Activated CD4-positive, alpha-beta T cell treated with anti-CD3 and anti-CD28 coated beads for 36 hours (primary cell): ENCODE measurements at regions of chr2 and their contacts with region 1.

Region 1: DNA sequence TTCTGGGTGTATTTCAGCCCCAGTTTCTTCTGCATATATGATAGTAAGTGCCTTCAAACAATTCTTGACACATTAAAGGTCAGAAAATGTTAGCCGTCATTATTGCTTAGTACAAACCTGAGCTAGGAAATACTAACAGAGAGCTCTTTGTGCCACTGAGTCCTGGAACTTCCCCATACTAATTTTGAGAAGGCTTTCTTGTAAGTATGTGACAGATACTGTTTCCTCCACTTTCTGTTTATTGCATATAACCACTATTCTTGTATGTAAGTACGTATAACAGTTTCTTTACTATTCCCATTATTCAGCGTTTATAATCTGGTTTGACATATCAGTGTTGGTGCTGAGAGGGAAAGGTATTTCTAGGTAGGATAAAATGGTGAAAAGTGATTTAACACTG is 9.8 kb downstream of the PPP1CB start:
- DNase-seq: no peak
- ATAC-seq: peak; percentile 59
- H3K4me3 Mint-ChIP-seq: no peak overlapping the region
- H3K27ac Mint-ChIP-seq: peak overlapping the region; percentile 58
- H3K4me1 Mint-ChIP-seq: peaks cover 78% of the 10 kb centered on the region
- H3K27me3 Mint-ChIP-seq: no peaks in the 10 kb centered on the region

Region 2: GRCh38 chr2:28674062-28674712 is 87.2 kb before region 1 on chr2:
- CTCF ChIA-PET with region 1: no interaction called
- POLR2A ChIA-PET with region 1: no interaction called
- intact Hi-C with region 1: no loop called
- DNase-seq: no peak
- ATAC-seq: no peak
- H3K4me3 Mint-ChIP-seq: no peak overlapping the region
- H3K27ac Mint-ChIP-seq: peak overlapping the region; percentile 35
- H3K4me1 Mint-ChIP-seq: peaks cover 12% of the 10 kb centered on the region
- H3K27me3 Mint-ChIP-seq: no peaks in the 10 kb centered on the region

Region 3: GRCh38 chr2:28780496-28780895 is 19.1 kb after region 1 on chr2:
- CTCF ChIA-PET with region 1: interaction called, 11 read pairs
- POLR2A ChIA-PET with region 1: no interaction called
- intact Hi-C with region 1: no loop called
- DNase-seq: no peak
- ATAC-seq: no peak
- H3K4me3 Mint-ChIP-seq: no peak overlapping the region
- H3K27ac Mint-ChIP-seq: peak overlapping the region; percentile 34
- H3K4me1 Mint-ChIP-seq: peaks cover 20% of the 10 kb centered on the region
- H3K27me3 Mint-ChIP-seq: no peaks in the 10 kb centered on the region